Transverse colon (tissue), 4 donors: ENCODE measurements at regions of chr3 and their contacts with region 1.

Region 1: DNA sequence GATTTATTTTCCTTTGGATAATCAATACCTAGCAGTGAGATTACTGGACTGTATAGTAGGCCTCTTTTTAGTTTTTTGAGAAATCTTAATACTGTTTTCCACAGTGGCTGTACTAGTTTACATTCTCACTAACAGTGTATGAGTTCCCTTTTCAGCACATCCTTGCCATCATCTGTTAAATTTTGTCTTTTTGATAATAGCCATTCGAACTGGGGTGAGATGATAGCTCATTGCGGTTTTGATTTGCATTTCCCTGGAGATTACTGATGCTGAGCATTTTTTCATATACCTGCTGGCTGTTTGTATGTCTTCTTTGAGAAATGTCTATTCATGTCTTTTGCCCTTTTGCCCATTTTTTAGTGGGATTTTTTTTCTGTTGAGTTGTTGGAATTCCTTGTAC is 210.8 kb downstream of the CGGBP1 start:
- DNase-seq: no peak
- H3K4me3 ChIP-seq: no peak overlapping the region
- H3K27ac ChIP-seq: no peak overlapping the region
- H3K4me1 ChIP-seq: no peaks in the 10 kb centered on the region
- H3K27me3 ChIP-seq: no peaks in the 10 kb centered on the region
- CTCF ChIP-seq: no peak
- EP300 ChIP-seq: no peak
- POLR2A ChIP-seq: no peak

Region 2: DNA sequence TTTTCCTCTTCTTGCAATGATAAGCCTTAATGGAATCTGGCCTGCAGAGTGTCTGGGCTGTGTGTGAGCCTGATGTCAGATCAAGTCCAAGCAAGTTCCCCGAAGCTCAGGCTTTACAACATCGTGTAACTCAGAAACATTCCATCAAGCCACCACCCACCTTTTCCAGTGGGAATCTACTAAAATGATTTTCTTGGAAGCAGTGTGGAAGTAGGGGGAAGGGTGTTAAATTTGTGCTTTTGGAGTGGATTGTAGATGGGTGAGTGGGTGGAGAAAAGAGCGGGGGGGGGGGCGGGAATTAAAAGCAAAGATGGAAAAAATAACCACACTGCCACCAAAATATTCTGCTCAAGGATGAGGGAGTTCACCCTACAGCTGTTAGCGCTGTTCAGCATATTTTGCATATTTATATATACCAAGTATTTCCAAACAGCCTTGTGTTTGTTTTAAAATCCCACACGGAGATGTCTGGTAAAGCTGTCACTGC is 910.7 kb before region 1 on chr3:
- in situ Hi-C with region 1: no loop called
- intact Hi-C with region 1: loop called (anchors 10 kb)
- DNase-seq: no peak
- H3K4me3 ChIP-seq: no peak overlapping the region
- H3K27ac ChIP-seq: peak overlapping the region in 2 of 4 donors; percentile 1 to 31
- H3K4me1 ChIP-seq: no peaks in the 10 kb centered on the region
- H3K27me3 ChIP-seq: no peaks in the 10 kb centered on the region
- CTCF ChIP-seq: no peak
- EP300 ChIP-seq: no peak
- POLR2A ChIP-seq: no peak

Region 3: DNA sequence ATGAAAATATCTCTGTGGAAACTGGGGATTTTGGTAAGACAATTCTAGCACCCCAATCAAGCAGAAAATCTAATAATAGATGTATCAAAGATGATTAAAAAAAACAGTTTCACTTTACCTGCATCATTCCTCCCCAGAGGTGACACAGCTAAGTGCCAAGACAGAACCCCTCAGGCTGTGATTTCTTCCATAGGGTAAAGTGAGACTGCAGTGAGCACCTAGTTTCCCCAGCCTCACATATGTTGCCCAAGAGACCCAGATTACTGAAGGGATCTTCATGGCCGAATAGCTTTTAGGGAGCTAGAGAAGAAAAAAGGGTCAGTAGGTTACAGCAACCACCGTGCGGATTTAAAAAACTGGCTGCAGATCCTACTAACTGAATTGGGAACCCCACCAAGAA is 467.2 kb before region 1 on chr3:
- in situ Hi-C with region 1: no loop called
- intact Hi-C with region 1: no loop called
- DNase-seq: no peak
- H3K4me3 ChIP-seq: no peak overlapping the region
- H3K27ac ChIP-seq: no peak overlapping the region
- H3K4me1 ChIP-seq: no peaks in the 10 kb centered on the region
- H3K27me3 ChIP-seq: no peaks in the 10 kb centered on the region
- CTCF ChIP-seq: no peak
- EP300 ChIP-seq: no peak
- POLR2A ChIP-seq: no peak

Region 4: DNA sequence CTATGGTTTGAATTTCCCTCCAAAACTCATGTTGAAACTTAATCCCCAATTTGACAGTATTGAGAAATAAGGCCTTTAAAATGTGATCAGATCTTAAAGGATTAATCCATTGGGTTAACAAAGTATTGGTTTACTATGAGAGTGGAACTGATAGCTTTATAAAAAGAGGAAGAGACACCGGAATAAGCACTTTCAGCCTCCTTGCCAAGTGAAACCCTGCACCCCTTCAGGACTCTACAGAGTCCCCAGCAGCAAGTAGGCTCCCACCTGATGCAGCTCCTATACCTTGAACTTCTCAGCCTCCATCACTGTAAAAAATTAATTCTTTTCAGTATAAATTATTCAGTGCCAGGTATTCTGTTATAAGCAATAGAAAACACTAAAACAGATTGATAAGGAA is 137.5 kb before region 1 on chr3:
- in situ Hi-C with region 1: no loop called
- intact Hi-C with region 1: no loop called
- DNase-seq: no peak
- H3K4me3 ChIP-seq: no peak overlapping the region
- H3K27ac ChIP-seq: no peak overlapping the region
- H3K4me1 ChIP-seq: no peaks in the 10 kb centered on the region
- H3K27me3 ChIP-seq: no peaks in the 10 kb centered on the region
- CTCF ChIP-seq: no peak
- EP300 ChIP-seq: no peak
- POLR2A ChIP-seq: no peak

Region 5: DNA sequence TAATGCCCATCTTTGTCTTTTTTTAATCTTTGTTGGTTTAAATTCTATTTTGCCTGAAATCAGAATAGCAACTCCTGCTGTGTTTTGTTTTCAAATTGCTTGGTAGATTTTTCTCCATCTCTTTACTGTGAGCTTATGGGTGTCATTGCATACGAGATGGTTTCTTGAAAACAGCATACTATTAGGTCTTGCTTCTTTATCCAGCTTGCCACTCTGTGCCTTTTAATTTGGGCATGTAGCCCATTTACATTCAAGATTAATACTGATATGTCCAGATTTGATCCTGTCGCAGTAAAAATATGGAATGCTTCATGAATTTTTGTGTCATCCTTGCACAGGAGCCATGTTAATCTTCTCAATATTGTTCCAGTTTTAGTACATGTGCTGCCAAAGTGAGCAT is 105.8 kb before region 1 on chr3:
- in situ Hi-C with region 1: no loop called
- intact Hi-C with region 1: no loop called
- DNase-seq: no peak
- H3K4me3 ChIP-seq: no peak overlapping the region
- H3K27ac ChIP-seq: no peak overlapping the region
- H3K4me1 ChIP-seq: no peaks in the 10 kb centered on the region
- H3K27me3 ChIP-seq: no peaks in the 10 kb centered on the region
- CTCF ChIP-seq: no peak
- EP300 ChIP-seq: no peak
- POLR2A ChIP-seq: no peak

Region 6: DNA sequence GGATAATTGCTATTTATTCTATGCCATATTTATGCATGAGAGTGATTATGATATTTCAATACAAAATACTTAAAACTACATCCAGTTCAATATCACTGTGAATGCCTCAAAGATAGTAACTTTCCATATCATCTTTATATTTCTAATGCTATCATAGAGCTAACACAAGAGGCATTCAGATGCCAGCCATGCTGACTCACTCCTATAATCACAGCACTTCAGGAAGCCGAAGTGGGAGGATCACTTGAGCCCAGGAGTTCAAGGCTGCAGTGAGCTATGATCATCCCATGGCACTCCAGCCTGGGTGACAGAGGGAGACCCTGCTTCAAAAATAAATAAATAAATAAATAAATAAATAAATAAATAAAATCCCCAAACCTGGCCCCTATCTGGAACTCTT is 1758.1 kb after region 1 on chr3:
- in situ Hi-C with region 1: no loop called
- intact Hi-C with region 1: no loop called
- DNase-seq: no peak
- H3K4me3 ChIP-seq: no peak overlapping the region
- H3K27ac ChIP-seq: no peak overlapping the region
- H3K4me1 ChIP-seq: no peaks in the 10 kb centered on the region
- H3K27me3 ChIP-seq: no peaks in the 10 kb centered on the region
- CTCF ChIP-seq: no peak
- EP300 ChIP-seq: no peak
- POLR2A ChIP-seq: no peak